ENCODE measurements at regions of chr12 and their contacts with region 1.

Region 1: GRCh38 chr12:4276524-4277204 is 3.1 kb downstream of the CCND2 start:
- DNase-seq: peak; percentile 92
- H3K4me3 Mint-ChIP-seq: peak overlapping the region; percentile 97
- H3K27ac Mint-ChIP-seq: peak overlapping the region; percentile 99
- H3K4me1 Mint-ChIP-seq: peaks cover 58% of the 10 kb centered on the region
- H3K27me3 Mint-ChIP-seq: no peaks in the 10 kb centered on the region

Region 2: DNA sequence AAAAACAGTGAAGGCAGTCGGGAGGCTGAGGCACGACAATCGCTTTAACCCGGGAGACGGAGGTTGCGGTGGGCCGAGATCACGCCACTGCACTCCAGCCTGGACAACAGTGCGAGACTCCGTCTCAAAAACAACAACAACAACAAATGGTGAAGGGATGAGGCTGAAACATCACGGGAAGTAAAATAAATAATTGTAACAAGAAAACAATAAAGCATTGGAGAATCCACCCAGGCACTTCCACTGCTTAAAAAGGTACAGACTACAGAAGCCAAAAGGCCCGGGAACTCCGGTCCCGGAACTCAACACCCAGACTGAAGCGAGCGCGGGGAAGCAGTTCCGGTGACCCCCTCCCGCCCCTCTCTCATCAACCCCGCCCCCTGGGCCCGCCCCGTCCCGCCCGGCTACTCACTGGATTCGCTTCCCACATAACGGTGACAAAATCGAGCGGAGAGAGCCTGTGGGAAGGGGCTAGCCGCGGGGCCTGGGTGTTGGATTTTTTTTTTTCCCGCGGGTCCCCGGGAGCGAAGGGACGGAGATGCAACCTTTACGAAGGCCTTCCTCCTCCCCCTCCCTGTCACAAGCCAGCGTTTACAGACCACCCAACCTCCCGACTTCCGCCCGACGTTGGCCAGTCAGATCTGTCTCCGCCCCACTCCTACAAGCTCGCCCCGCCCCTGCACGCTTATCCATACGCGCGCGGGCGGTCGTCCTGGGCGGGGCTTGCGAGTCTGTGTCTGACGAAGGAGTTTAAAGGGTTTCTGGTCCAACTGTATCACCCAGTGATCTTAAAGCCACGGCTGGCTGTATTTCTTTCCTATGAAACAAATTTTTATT is 403.6 kb before region 1 on chr12 and contains the start of gene PARP11:
- CTCF ChIA-PET with region 1: interaction called, 5 read pairs
- POLR2A ChIA-PET with region 1: no interaction called
- intact Hi-C with region 1: loop called (anchors 1 kb)
- DNase-seq: peak; percentile 98
- H3K4me3 Mint-ChIP-seq: peak within 1 kb of the TSS; percentile 91
- H3K27ac Mint-ChIP-seq: peak within 1 kb of the TSS; percentile 97
- H3K4me1 Mint-ChIP-seq: peaks cover 46% of the 10 kb centered on the region
- H3K27me3 Mint-ChIP-seq: no peaks in the 10 kb centered on the region
- total RNA-seq, gene PARP11: 16.6 to 17.8 TPM

Region 3: GRCh38 chr12:3988519-3989448 is 287.9 kb before region 1 on chr12:
- CTCF ChIA-PET with region 1: interaction called, 153 read pairs
- POLR2A ChIA-PET with region 1: interaction called, 4 read pairs
- intact Hi-C with region 1: no loop called
- DNase-seq: peak; percentile 57
- H3K4me3 Mint-ChIP-seq: no peak overlapping the region
- H3K27ac Mint-ChIP-seq: peak overlapping the region; percentile 47
- H3K4me1 Mint-ChIP-seq: peaks cover 30% of the 10 kb centered on the region
- H3K27me3 Mint-ChIP-seq: no peaks in the 10 kb centered on the region

Region 4: DNA sequence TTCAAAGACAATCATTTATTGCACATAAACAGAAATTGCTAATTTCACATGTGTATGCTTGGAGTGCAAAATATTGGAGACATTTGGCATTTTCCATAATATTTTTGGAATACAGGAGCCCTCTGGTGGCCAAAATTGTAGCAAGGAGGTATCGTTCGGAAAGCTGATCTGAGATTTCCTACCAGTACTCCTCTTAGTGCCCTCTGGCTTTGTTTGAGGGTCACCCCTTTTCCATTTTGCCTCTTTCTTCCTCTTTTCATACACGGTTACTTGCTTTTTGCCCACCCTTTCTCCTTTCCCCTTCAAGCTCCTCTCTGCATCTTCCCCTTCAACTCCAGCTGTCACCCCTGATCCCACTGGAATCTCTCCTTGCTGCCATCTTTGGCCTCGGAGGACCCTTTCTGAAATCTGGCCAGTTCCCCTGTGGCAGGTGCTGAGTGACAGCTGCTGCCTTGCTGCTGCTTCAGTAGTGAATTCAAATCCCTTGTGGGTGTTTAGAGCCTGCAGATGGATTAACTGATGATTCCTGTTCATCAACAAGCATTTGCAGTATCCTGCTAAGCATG is 238.8 kb before region 1 on chr12:
- CTCF ChIA-PET with region 1: interaction called, 32 read pairs
- POLR2A ChIA-PET with region 1: no interaction called
- intact Hi-C with region 1: no loop called
- DNase-seq: no peak
- H3K4me3 Mint-ChIP-seq: no peak overlapping the region
- H3K27ac Mint-ChIP-seq: no peak overlapping the region
- H3K4me1 Mint-ChIP-seq: peaks cover 4% of the 10 kb centered on the region
- H3K27me3 Mint-ChIP-seq: no peaks in the 10 kb centered on the region

Region 5: GRCh38 chr12:4107436-4107878 is 169.2 kb before region 1 on chr12:
- CTCF ChIA-PET with region 1: interaction called, 92 read pairs
- POLR2A ChIA-PET with region 1: interaction called, 18 read pairs
- intact Hi-C with region 1: loop called (anchors 1 kb)
- DNase-seq: peak; percentile 80
- H3K4me3 Mint-ChIP-seq: peak overlapping the region; percentile 17
- H3K27ac Mint-ChIP-seq: peak overlapping the region; percentile 75
- H3K4me1 Mint-ChIP-seq: peaks cover 40% of the 10 kb centered on the region
- H3K27me3 Mint-ChIP-seq: peaks cover 8% of the 10 kb centered on the region

Region 6: DNA sequence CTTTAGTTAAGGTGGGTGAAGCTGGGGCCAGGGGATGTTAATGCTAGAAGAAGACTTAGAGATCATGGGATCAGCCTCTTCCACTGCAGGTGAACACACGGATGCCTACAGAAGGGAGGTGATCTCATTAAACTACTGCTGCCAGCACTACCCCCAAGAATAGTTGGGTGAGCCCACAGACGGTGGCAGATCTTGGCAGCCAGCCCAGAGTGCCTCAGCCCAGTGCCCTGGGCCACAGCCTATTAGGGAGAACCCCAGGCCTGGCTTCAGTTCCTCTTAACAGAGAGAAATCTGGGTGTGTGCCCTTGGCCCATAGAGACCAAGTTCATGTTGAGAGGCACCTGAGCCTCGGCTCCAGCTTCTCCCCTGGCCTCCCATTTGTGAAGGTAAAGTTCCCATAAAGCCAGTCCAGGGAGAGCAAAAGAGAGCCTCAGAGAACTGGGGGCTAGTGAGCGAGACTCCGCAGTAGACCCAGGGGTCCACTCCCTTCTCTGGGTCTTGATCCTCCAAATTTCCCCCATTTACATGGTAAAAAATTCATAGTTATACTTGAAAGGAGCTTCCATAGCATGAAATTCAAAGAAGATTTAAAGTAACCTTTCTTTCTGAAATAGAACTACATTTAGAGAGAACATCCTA is 128.1 kb before region 1 on chr12:
- CTCF ChIA-PET with region 1: interaction called, 76 read pairs
- POLR2A ChIA-PET with region 1: interaction called, 205 read pairs
- intact Hi-C with region 1: loop called (anchors 1 kb)
- DNase-seq: peak; percentile 72
- H3K4me3 Mint-ChIP-seq: no peak overlapping the region
- H3K27ac Mint-ChIP-seq: peak overlapping the region; percentile 53
- H3K4me1 Mint-ChIP-seq: peaks cover 86% of the 10 kb centered on the region
- H3K27me3 Mint-ChIP-seq: no peaks in the 10 kb centered on the region

Region 7: DNA sequence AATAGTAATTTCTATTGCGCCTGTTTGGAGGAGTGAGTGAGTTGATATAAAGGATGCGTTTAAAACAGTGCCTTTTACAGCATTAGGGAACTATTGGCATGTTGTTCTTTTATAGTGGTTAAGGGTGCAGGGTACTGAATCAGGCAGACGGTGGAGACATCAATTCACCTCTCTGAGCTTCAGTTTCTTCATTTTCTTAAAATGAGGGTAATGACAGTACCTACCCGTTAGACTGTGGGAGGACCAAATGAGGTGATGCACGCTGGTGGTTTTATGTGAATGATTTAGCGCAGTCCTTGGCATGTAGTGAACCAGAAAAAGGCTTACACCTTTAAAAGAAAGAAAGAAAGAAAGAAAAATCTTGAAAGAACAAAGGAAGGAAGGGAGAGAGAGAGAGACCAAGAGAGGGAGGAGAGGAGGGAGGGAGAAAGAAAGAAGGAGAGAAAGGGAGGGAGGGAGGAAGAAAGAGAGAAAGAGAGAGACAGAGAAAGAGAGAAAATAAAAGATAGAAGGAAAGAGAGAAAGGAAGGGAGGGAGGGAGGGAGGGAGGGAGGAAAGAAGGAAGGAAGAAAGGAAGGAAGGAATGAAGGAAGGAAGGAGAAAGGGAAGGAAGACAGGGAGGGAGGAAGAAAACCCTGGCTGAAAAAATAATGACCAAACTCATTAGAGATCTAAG is 25.3 kb before region 1 on chr12:
- CTCF ChIA-PET with region 1: interaction called, 33 read pairs
- POLR2A ChIA-PET with region 1: interaction called, 9 read pairs
- intact Hi-C with region 1: loop called (anchors 1 kb)
- DNase-seq: peak; percentile 61
- H3K4me3 Mint-ChIP-seq: no peak overlapping the region
- H3K27ac Mint-ChIP-seq: no peak overlapping the region
- H3K4me1 Mint-ChIP-seq: peaks cover 15% of the 10 kb centered on the region
- H3K27me3 Mint-ChIP-seq: peaks cover 2% of the 10 kb centered on the region